Activated naive CD4-positive, alpha-beta T cell treated with anti-CD3 and anti-CD28 coated beads for 36 hours (primary cell): ENCODE measurements at regions of chr1 and their contacts with region 1.

Region 1: DNA sequence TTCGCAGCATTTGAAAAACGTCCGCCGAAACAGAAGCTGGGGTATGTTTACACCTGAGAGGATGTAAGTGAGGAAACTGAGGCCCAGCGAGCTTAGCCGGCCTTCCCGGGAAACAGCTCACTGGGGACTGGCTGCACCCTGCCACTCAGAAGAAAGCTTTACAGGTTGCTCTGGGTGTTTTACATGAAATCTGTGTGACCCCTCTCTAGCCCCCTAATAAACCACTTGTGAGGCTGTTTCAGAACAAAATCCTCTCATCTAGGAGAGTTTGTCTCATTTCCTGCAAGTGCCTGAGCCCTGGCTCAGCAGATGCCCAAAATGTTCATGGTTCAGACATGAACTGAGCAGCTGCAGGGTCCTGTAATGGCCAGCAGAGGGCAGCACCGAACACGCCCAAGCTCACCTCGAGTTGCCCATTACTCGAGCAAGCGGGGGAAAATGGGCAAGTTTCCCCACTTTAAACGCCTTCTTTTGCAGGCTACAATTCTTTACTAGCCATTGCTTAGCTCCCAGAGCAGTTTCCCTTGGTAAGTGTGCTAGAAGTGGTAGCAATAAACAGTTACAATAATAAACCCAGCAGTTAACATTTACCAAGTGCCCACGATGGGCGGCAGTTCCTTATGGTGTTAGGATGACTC is 76.4 kb downstream of the FHAD1 start:
- DNase-seq: peak; percentile 85
- H3K4me3 Mint-ChIP-seq: no peak overlapping the region
- H3K27ac Mint-ChIP-seq: no peak overlapping the region
- H3K4me1 Mint-ChIP-seq: no peaks in the 10 kb centered on the region
- H3K27me3 Mint-ChIP-seq: no peaks in the 10 kb centered on the region

Region 2: DNA sequence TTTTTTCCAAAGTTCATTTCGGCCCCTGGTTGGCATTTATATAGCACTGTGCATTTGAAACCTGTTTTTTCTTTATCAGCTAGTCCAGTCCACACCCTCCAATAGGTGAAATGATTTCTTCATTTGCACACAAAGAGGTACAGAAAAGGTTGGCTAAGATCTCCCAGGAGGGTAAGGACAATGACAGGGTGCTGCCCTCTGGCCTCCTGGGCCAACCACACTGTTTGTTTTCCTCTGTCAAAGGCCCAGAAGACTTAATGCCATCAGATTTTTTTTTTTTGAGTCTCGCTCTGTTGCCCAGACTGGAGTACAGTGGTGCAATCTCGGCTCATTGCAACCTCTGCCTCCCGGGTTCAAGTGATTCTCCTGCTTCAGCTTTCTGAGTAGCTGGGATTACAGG is 16.1 kb after region 1 on chr1:
- CTCF ChIA-PET with region 1: interaction called, 29 read pairs
- intact Hi-C with region 1: no loop called
- DNase-seq: no peak
- H3K4me3 Mint-ChIP-seq: no peak overlapping the region
- H3K27ac Mint-ChIP-seq: no peak overlapping the region
- H3K4me1 Mint-ChIP-seq: no peaks in the 10 kb centered on the region
- H3K27me3 Mint-ChIP-seq: peaks cover 23% of the 10 kb centered on the region

Region 3: GRCh38 chr1:15417365-15417934 is 94.0 kb after region 1 on chr1:
- CTCF ChIA-PET with region 1: interaction called, 14 read pairs
- intact Hi-C with region 1: no loop called
- DNase-seq: peak; percentile 61
- H3K4me3 Mint-ChIP-seq: no peak overlapping the region
- H3K27ac Mint-ChIP-seq: peak overlapping the region; percentile 71
- H3K4me1 Mint-ChIP-seq: peaks cover 47% of the 10 kb centered on the region
- H3K27me3 Mint-ChIP-seq: no peaks in the 10 kb centered on the region

Region 4: GRCh38 chr1:15430787-15431570 is 107.5 kb after region 1 on chr1:
- CTCF ChIA-PET with region 1: interaction called, 101 read pairs
- intact Hi-C with region 1: loop called (anchors 1 kb)
- DNase-seq: peak; percentile 83
- H3K4me3 Mint-ChIP-seq: no peak overlapping the region
- H3K27ac Mint-ChIP-seq: no peak overlapping the region
- H3K4me1 Mint-ChIP-seq: no peaks in the 10 kb centered on the region
- H3K27me3 Mint-ChIP-seq: no peaks in the 10 kb centered on the region

Region 5: DNA sequence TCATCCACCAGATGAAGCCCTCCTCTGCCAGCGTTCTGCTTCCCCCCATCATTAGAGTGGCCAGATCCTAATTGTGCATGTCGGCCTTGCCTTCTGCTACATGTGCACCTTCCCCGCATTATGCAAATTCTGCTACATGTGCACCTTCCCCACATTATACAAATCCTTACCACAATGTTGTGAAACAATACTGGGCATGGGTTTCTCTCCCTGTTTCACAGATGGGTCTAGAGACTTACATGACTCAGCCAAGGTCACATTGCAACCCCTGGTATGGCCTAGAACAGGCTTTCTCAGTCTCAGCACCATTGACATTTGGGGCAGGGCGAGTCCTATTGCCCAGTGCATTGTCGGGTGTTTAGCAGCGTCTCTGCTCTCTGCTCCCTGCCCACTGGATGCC is 132.1 kb after region 1 on chr1:
- CTCF ChIA-PET with region 1: no interaction called
- intact Hi-C with region 1: no loop called
- DNase-seq: no peak
- H3K4me3 Mint-ChIP-seq: no peak overlapping the region
- H3K27ac Mint-ChIP-seq: no peak overlapping the region
- H3K4me1 Mint-ChIP-seq: no peaks in the 10 kb centered on the region
- H3K27me3 Mint-ChIP-seq: peaks cover 1% of the 10 kb centered on the region

Region 6: DNA sequence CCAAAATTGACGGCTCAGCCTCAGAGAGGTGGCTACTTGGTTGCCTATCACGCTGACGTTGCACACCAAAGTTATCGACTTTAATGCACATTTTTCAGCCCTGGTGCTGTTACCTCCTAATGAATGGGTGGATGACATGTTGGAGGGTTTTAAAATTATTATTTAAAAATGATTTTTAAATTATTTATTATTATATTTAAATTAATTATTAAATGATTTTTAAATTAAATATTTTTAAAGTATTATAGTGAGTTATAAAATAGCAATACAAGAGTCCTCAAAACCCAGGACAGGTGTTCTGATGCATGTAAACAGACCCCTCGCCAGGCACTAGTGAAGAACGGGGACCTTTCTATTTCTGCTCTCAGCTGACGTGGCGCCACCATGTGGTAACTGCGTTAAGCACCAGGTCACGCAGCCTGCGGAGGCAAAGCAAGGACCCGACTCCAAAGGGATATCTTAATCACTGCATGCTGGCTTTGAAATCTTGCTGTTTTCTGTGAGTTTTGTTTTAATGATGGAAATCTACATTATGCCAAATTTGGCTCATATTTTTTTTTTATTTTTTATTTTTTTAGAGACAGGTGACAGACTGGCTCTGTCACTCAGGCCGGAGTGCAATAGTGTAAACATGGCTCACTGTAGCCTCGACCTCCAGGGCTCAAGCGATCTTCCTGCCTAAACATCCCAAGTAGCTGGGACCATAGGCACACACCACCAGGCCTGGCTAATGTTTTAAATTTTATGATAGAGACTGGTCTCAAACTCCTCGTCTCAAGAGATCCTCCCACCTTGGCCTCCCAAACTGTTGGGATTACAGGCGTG is 177.9 kb after region 1 on chr1:
- CTCF ChIA-PET with region 1: no interaction called
- intact Hi-C with region 1: loop called (anchors 2 kb)
- DNase-seq: peak; percentile 78
- H3K4me3 Mint-ChIP-seq: no peak overlapping the region
- H3K27ac Mint-ChIP-seq: no peak overlapping the region
- H3K4me1 Mint-ChIP-seq: no peaks in the 10 kb centered on the region
- H3K27me3 Mint-ChIP-seq: no peaks in the 10 kb centered on the region

Region 7: GRCh38 chr1:15741183-15741850 is 417.8 kb after region 1 on chr1:
- CTCF ChIA-PET with region 1: no interaction called
- intact Hi-C with region 1: loop called (anchors 2 kb)
- DNase-seq: peak; percentile 87
- H3K4me3 Mint-ChIP-seq: no peak overlapping the region
- H3K27ac Mint-ChIP-seq: no peak overlapping the region
- H3K4me1 Mint-ChIP-seq: peaks cover 5% of the 10 kb centered on the region
- H3K27me3 Mint-ChIP-seq: no peaks in the 10 kb centered on the region

Region 8: DNA sequence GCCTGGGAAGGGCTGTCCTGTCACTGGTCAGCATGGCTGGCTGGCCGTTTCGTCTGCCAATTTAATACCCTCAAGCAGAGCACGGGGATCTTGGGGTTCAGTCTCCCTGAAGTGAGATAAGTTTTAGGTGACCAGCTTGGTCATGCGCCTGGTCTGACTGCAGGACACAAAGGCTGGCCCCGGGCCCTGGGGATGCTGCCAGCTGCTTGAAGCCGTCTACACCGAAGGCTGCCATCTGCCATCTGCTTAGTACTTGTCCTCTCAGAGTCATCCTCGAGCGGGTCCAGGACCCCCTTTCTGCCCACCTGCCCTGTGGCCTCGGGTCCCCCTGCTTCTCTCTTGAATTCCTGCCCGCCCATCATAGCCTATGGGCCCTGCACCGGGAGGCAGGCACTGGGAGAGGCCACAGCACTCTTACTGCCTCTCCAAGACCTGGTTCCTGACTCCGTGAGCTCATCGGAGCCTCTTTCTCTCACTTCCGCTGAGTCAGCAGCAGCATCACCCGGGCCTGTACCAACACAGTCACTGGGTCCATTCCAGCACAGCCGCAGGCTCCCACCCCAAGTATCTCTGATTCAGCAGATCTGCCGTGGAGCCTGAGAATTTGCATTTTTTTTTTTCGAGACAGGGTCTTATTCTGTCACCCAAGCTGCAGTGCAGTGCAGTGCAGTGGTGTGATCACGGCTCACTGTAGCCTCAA is 442.2 kb after region 1 on chr1:
- CTCF ChIA-PET with region 1: no interaction called
- intact Hi-C with region 1: no loop called
- DNase-seq: no peak
- H3K4me3 Mint-ChIP-seq: no peak overlapping the region
- H3K27ac Mint-ChIP-seq: no peak overlapping the region
- H3K4me1 Mint-ChIP-seq: no peaks in the 10 kb centered on the region
- H3K27me3 Mint-ChIP-seq: peaks cover 8% of the 10 kb centered on the region